Mammary epithelial cell (primary cell): ENCODE measurements at regions of chr4 and their contacts with region 1.

Region 1: DNA sequence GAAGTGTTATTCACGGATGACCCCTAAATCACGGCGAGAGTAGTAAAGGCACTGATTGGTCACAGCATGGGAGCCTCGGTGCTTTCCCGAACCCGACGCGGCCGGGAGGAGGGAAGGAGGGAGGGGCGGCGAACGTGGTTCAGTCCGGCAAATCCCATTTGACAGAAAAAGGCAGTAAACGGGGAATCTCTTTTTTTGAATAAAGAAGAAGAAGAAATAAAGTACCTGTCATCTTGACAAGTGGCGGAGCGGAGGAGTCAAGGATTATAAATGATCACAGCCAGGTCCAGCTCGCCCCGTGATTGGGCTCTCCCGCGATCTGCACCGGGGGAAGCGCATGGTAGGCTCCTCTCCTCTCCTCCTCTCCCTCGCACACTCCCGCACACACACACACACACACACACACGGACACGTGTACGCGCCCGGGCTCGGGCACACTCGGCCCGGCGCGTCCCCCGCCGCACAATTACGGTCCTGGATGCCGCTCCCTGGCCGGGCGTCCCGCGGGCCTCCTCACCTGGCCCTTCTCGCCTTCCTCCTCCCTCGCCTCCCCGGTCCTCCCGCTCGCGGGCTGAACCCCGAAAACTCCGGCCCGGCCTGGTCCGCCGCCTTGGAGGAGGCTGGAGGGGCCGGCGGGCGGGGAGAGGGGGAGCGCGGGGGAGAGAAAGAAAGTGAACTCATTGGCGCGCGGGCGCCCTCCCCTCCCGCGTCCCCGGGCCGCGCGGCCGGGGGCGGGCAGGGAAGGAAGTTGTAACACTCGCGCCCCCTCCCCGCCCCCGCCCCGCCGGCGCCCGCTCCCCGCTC is 99.2 kb upstream of the TENM3 start:
- DNase-seq: peak; percentile 88
- H3K4me3 ChIP-seq: peak overlapping the region; percentile 67 to 88 (median 71)
- H3K27ac ChIP-seq: peak overlapping the region; percentile 99
- H3K4me1 ChIP-seq: peaks cover 25% of the 10 kb centered on the region
- H3K27me3 ChIP-seq: no peaks in the 10 kb centered on the region
- CTCF ChIP-seq: no peak

Region 2: DNA sequence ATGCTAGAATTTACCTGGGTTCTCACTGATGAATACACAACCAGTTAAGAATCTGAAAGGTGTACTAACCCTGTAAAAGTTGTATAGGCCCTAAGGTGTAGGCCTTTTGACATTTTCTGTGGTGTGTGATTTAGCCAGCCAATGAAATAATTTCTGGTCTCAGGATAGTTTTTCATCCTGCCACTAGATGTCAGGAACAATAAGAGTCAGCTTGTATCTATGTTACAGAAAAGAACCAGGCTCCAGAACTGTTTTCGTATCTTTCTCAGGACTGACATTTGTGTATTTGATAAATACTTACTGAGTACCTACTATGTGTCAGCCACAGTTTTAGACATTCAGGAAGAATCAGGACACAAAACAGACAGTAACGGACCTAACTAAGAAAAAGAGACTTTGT is 574.5 kb before region 1 on chr4:
- CTCF ChIA-PET with region 1: no interaction called
- dilution Hi-C with region 1: no loop called
- in situ Hi-C with region 1: loop called in 1 of 2 experiments (anchors 25 kb)
- intact Hi-C with region 1: loop called (anchors 10 kb)
- DNase-seq: peak; percentile 46
- H3K4me3 ChIP-seq: no peak overlapping the region
- H3K27ac ChIP-seq: no peak overlapping the region
- H3K4me1 ChIP-seq: no peaks in the 10 kb centered on the region
- H3K27me3 ChIP-seq: no peaks in the 10 kb centered on the region
- CTCF ChIP-seq: peak; percentile 57 to 71

Region 3: DNA sequence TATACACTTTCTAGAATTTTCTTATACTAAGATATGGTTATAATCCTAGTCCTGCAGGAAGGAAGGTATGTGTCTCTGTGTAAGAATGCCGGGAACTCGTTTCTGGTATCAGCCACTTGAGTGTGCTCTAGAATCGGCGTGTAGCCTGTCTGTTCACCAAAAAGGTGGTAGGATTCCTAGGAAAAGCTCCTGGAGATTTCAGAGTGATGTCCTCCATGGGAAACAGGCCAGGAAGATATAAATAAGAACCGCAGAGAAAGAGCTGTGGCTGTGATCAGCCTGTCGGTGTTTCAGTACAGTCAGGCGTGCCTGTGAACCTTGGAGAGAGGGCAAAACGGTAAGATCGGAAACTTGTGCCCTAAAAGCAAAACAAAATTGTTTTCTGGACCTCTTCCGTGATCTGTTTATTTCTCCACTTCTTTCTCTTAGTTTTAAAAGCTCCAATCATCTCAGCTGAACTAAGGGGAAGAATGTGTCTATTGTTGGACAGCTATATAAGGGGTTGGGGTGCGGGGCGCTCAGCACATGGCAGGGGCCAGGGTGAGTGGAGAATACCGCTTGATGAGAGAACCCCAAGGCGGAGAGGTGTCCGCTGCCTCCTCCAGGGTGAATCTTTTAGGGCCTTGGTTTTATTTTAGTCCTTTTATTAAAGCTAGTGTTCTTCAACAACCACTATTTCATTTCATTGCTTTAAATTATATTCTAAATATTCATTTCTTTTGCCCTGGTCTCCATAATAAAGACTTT is 204.7 kb before region 1 on chr4:
- CTCF ChIA-PET with region 1: no interaction called
- dilution Hi-C with region 1: no loop called
- in situ Hi-C with region 1: no loop called
- intact Hi-C with region 1: loop called (anchors 1 kb)
- DNase-seq: peak; percentile 59
- H3K4me3 ChIP-seq: peak overlapping the region in 1 of 3 experiments; percentile 26
- H3K27ac ChIP-seq: peak overlapping the region; percentile 25
- H3K4me1 ChIP-seq: peaks cover 4% of the 10 kb centered on the region
- H3K27me3 ChIP-seq: no peaks in the 10 kb centered on the region
- CTCF ChIP-seq: peak; percentile 46 to 63

Region 4: GRCh38 chr4:182192511-182193181 is 48.6 kb after region 1 on chr4:
- CTCF ChIA-PET with region 1: no interaction called
- dilution Hi-C with region 1: loop called (anchors 5 kb)
- in situ Hi-C with region 1: no loop called
- intact Hi-C with region 1: loop called (anchors 5 kb)
- DNase-seq: peak; percentile 84
- H3K4me3 ChIP-seq: no peak overlapping the region
- H3K27ac ChIP-seq: peak overlapping the region; percentile 7
- H3K4me1 ChIP-seq: peaks cover 39% of the 10 kb centered on the region
- H3K27me3 ChIP-seq: no peaks in the 10 kb centered on the region
- CTCF ChIP-seq: no peak

Region 5: GRCh38 chr4:182280436-182281111 is 136.6 kb after region 1 on chr4:
- CTCF ChIA-PET with region 1: no interaction called
- dilution Hi-C with region 1: no loop called
- in situ Hi-C with region 1: no loop called
- intact Hi-C with region 1: no loop called
- DNase-seq: no peak
- H3K4me3 ChIP-seq: no peak overlapping the region
- H3K27ac ChIP-seq: no peak overlapping the region
- H3K4me1 ChIP-seq: no peaks in the 10 kb centered on the region
- H3K27me3 ChIP-seq: no peaks in the 10 kb centered on the region
- CTCF ChIP-seq: no peak

Region 6: DNA sequence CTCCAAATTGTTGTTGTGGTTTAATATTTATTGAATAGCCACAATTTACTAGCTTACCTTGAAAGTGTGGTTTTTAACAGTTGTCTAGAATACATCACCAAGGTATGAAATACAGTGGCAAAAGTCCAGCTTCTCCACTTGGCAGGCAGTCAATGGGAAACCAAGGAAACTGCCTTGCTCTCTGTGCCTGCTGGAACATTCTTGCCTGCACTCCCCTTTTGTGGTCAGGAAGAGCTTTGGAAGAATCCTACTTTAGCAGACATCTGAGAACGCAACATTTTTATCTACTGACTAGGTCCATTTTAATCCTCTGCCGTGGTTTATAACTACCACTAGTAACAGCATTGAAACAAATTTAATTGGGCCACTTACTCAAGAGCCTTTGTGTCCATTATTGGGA is 163.7 kb after region 1 on chr4:
- CTCF ChIA-PET with region 1: no interaction called
- dilution Hi-C with region 1: no loop called
- in situ Hi-C with region 1: no loop called
- intact Hi-C with region 1: loop called (anchors 1 kb)
- DNase-seq: peak; percentile 98
- H3K4me3 ChIP-seq: peak overlapping the region in 1 of 3 experiments; percentile 3
- H3K27ac ChIP-seq: peak overlapping the region; percentile 92
- H3K4me1 ChIP-seq: peaks cover 24% of the 10 kb centered on the region
- H3K27me3 ChIP-seq: no peaks in the 10 kb centered on the region
- CTCF ChIP-seq: no peak